Heart left ventricle (tissue), 16 donors: ENCODE measurements at regions of chr1 and their contacts with region 1.

Region 1: DNA sequence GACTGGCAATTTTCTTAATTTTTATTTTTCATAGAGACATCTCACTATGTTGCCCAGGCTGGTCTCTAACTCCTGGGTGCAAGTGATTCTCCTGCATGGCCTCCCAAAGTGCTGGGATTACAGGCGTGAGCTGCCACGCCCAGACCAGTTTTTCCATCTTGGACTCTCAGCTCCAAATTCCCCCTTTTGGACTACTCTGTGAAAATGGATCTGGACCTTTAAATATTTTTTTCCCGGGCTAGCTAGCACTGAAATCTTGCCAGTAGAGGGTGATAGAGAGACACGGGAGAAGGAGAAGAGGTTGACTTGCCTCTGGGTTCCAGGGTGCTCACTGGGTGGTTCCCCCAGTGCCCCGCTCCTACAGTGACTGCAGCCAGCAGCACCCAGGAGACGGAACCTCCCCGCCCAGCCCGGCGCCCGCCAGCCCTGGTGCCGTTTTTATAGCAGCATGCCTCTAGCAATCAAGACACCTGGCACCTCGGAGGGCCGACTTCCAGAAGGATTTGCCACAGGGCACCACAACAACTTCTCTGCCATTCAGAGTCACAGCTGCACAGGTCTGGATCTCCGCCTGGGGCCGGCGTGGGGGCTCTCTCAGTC is 34.7 kb upstream of the SCCPDH start:
- DNase-seq: peak; percentile 36 to 71 (median 57)
- ATAC-seq: peak; percentile 70 to 90 (median 84)
- H3K4me3 ChIP-seq: peak overlapping the region in 9 of 12 donors; percentile 35 to 60 (median 46)
- H3K27ac ChIP-seq: peak overlapping the region in 6 of 12 donors; percentile 42 to 64 (median 52)
- H3K4me1 ChIP-seq: peaks cover 0 to 19% (median 6%) of the 10 kb centered on the region in 12 donors
- H3K27me3 ChIP-seq: no peaks in the 10 kb centered on the region
- CTCF ChIP-seq: peak; percentile 64 to 86 (median 76)
- POLR2A ChIP-seq: no peak

Region 2: DNA sequence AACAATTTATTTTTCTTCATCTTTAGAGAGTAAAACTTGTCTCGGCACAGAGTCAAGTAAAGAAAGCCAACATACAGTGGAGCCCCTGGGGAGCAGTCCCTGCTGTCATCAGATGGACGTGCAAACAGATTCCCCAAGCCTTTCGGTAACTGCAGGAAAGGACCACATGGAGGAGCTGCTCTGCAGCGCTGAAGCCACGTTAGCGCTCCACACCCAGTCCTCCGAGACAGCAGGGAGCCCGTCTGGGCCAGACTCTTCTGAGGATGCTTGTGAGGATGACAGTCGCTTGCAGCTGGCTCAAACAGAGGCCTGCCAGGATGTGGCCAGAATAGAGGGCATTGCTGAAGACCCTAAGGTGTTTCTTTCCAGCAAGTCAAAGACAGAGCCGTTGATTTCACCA is 42.4 kb before region 1 on chr1:
- intact Hi-C with region 1: loop called in 5 of 10 experiments (anchors 5 to 10 kb)
- DNase-seq: peak; percentile 73 to 84 (median 74)
- ATAC-seq: peak; percentile 84 to 97 (median 96)
- H3K4me3 ChIP-seq: peak overlapping the region in 10 of 12 donors; percentile 9 to 58 (median 46)
- H3K27ac ChIP-seq: peak overlapping the region in 11 of 12 donors; percentile 35 to 77 (median 58)
- H3K4me1 ChIP-seq: peaks cover 0 to 24% (median 1%) of the 10 kb centered on the region in 12 donors
- H3K27me3 ChIP-seq: no peaks in the 10 kb centered on the region
- CTCF ChIP-seq: peak; percentile 38 to 79 (median 64)
- POLR2A ChIP-seq: no peak

Region 3: GRCh38 chr1:246748006-246748405 is 58.5 kb after region 1 on chr1:
- intact Hi-C with region 1: no loop called
- DNase-seq: no peak
- ATAC-seq: no peak
- H3K4me3 ChIP-seq: no peak overlapping the region
- H3K27ac ChIP-seq: no peak overlapping the region
- H3K4me1 ChIP-seq: no peaks in the 10 kb centered on the region
- H3K27me3 ChIP-seq: no peaks in the 10 kb centered on the region
- CTCF ChIP-seq: no peak
- POLR2A ChIP-seq: no peak